ENCODE measurements at regions of chr10 and their contacts with region 1.

Region 1: GRCh38 chr10:28334296-28334695 is 31.4 kb upstream of the MPP7 start:
- DNase-seq: peak; percentile 90
- ATAC-seq: peak; percentile 69
- H3K4me3 ChIP-seq: peak overlapping the region in 4 of 5 experiments; percentile 4 to 40 (median 24)
- H3K4me3 Mint-ChIP-seq: peak overlapping the region; percentile 89
- H3K27ac ChIP-seq: peak overlapping the region; percentile 74 to 97
- H3K27ac Mint-ChIP-seq: peak overlapping the region; percentile 97
- H3K4me1 ChIP-seq: peaks cover 26 to 33% of the 10 kb centered on the region in 2 donors
- H3K4me1 Mint-ChIP-seq: peaks cover 35% of the 10 kb centered on the region
- H3K27me3 ChIP-seq: no peaks in the 10 kb centered on the region
- H3K27me3 Mint-ChIP-seq: peaks cover 4% of the 10 kb centered on the region
- CTCF ChIP-seq: no peak

Region 2: DNA sequence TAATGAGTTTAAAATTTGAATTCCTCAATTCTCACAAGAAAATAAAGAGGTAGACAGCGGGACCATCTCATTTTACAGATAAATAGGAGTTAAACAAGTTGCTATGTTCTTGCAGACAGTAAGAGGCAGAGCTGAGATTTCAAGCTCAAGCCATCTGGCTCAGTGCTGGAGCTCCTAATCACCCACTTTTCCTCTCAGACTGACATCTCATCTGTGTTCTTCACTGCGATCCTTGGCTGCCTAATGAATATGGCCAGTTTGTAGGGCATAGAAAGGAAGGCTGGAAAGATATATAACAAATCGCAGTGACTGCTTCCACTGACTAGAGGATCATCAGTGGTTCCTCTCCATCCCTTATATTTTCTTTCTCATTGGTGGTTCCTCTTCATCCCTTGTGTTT is 182.7 kb before region 1 on chr10:
- CTCF ChIA-PET with region 1: no interaction called
- POLR2A ChIA-PET with region 1: no interaction called
- intact Hi-C with region 1: no loop called
- DNase-seq: no peak
- ATAC-seq: no peak
- H3K4me3 ChIP-seq: no peak overlapping the region
- H3K4me3 Mint-ChIP-seq: no peak overlapping the region
- H3K27ac ChIP-seq: no peak overlapping the region
- H3K27ac Mint-ChIP-seq: no peak overlapping the region
- H3K4me1 ChIP-seq: no peaks in the 10 kb centered on the region
- H3K4me1 Mint-ChIP-seq: no peaks in the 10 kb centered on the region
- H3K27me3 ChIP-seq: no peaks in the 10 kb centered on the region
- H3K27me3 Mint-ChIP-seq: no peaks in the 10 kb centered on the region
- CTCF ChIP-seq: no peak

Region 3: DNA sequence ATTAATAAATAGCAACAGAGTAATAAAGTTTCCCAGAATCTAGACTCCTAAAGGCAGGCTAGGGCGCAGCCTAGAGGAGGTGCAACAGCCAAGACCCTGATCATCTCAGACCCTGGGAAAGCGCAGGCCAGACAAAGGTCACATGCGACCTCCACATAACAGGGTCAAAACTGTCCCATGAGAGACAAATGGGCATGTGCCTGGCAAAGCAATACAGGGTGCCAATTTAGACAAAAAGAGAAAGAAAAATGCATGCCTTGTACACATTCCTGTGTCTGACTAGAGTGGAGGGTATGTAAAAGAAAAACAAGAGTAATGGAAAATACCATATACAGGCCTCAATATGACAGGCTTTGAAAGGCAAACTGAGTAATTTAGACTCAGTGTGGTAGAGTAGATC is 53.6 kb before region 1 on chr10:
- CTCF ChIA-PET with region 1: no interaction called
- POLR2A ChIA-PET with region 1: no interaction called
- intact Hi-C with region 1: no loop called
- DNase-seq: no peak
- ATAC-seq: no peak
- H3K4me3 ChIP-seq: no peak overlapping the region
- H3K4me3 Mint-ChIP-seq: no peak overlapping the region
- H3K27ac ChIP-seq: no peak overlapping the region
- H3K27ac Mint-ChIP-seq: no peak overlapping the region
- H3K4me1 ChIP-seq: peaks cover 9 to 10% of the 10 kb centered on the region in 2 donors
- H3K4me1 Mint-ChIP-seq: peaks cover 17% of the 10 kb centered on the region
- H3K27me3 ChIP-seq: no peaks in the 10 kb centered on the region
- H3K27me3 Mint-ChIP-seq: no peaks in the 10 kb centered on the region
- CTCF ChIP-seq: no peak

Region 4: GRCh38 chr10:28355376-28355775 is 21.1 kb after region 1 on chr10:
- CTCF ChIA-PET with region 1: no interaction called
- POLR2A ChIA-PET with region 1: no interaction called
- intact Hi-C with region 1: loop called (anchors 1 kb)
- DNase-seq: no peak
- ATAC-seq: no peak
- H3K4me3 ChIP-seq: no peak overlapping the region
- H3K4me3 Mint-ChIP-seq: no peak overlapping the region
- H3K27ac ChIP-seq: no peak overlapping the region
- H3K27ac Mint-ChIP-seq: no peak overlapping the region
- H3K4me1 ChIP-seq: no peaks in the 10 kb centered on the region
- H3K4me1 Mint-ChIP-seq: peaks cover 2% of the 10 kb centered on the region
- H3K27me3 ChIP-seq: no peaks in the 10 kb centered on the region
- H3K27me3 Mint-ChIP-seq: peaks cover 6% of the 10 kb centered on the region
- CTCF ChIP-seq: no peak

Region 5: GRCh38 chr10:28367929-28368484 is 33.7 kb after region 1 on chr10:
- CTCF ChIA-PET with region 1: interaction called, 9 read pairs
- POLR2A ChIA-PET with region 1: interaction called, 4 read pairs
- intact Hi-C with region 1: loop called (anchors 1 kb)
- DNase-seq: peak; percentile 85
- ATAC-seq: peak; percentile 98
- H3K4me3 ChIP-seq: peak overlapping the region in 1 of 5 experiments; percentile 9
- H3K4me3 Mint-ChIP-seq: peak overlapping the region; percentile 66
- H3K27ac ChIP-seq: peak overlapping the region; percentile 78 to 84
- H3K27ac Mint-ChIP-seq: peak overlapping the region; percentile 90
- H3K4me1 ChIP-seq: peaks cover 38 to 46% of the 10 kb centered on the region in 2 donors
- H3K4me1 Mint-ChIP-seq: peaks cover 33% of the 10 kb centered on the region
- H3K27me3 ChIP-seq: no peaks in the 10 kb centered on the region
- H3K27me3 Mint-ChIP-seq: no peaks in the 10 kb centered on the region
- CTCF ChIP-seq: no peak